Activated T-helper 1 cell treated with anti-CD3 and anti-CD28 coated beads, Interleukin-12 subunit alpha, Interleukin-12 subunit beta, Interleukin-2, Interleukin-4 antibody, amounts not matched to agents 30 ng/mL and 10 ng/mL and 1 ng/mL, durations not matched to agents 14 hours and 24 hours and 36 hours (primary cell): ENCODE measurements at regions of chr1 and their contacts with region 1.

Region 1: DNA sequence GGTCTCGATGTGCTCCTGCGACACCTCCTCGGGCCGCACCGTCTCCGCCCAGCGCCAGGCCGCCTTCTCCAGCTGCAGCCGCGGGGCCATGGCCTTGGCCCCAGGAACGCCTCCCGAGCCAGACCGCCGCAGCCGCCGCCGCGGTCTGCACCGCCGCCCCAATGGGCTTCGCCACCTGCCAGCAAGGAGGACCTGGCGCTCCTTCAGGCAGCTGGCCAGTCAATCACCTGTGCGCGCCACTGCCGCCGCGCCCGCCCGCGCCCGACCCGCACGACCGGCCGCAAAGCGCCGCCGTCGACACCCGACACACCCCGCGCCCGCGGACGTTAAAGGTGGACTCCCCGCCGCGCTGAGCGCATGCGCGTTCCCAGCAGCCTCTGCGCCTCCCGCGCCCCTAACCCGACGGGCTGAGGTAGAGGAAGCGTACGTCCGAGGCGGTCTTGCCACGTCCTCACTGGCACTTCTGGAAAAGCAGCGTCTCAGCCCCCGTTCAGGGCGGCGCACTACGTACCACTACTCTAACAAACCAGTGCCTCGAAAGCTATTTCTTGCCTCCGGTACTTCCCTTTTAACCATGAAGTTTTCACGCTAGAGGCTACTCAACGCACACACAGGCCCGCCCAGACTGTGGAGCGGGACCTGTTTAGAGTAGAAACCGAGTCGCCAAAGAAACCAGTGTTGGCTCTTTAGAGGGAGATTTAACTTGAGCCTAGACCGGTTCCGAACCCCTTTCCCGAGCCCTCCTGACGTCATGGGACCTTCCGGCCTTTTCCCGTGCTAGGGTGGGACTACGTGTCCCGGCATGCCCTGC is at the start of gene USP48:
- DNase-seq: peak; percentile 98
- H3K4me3 Mint-ChIP-seq: peak within 1 kb of the TSS; percentile 91
- H3K27ac Mint-ChIP-seq: peak within 1 kb of the TSS; percentile 100
- H3K4me1 Mint-ChIP-seq: peaks cover 26% of the 10 kb centered on the region
- H3K27me3 Mint-ChIP-seq: peaks cover 3% of the 10 kb centered on the region
- total RNA-seq, gene USP48: 88.7 and 97.1 TPM in 2 replicates

Region 2: GRCh38 chr1:21294266-21294989 is 488.6 kb before region 1 on chr1:
- intact Hi-C with region 1: loop called (anchors 1 kb)
- DNase-seq: peak; percentile 79
- H3K4me3 Mint-ChIP-seq: peak overlapping the region; percentile 76
- H3K27ac Mint-ChIP-seq: peak overlapping the region; percentile 95
- H3K4me1 Mint-ChIP-seq: peaks cover 80% of the 10 kb centered on the region
- H3K27me3 Mint-ChIP-seq: no peaks in the 10 kb centered on the region

Region 3: DNA sequence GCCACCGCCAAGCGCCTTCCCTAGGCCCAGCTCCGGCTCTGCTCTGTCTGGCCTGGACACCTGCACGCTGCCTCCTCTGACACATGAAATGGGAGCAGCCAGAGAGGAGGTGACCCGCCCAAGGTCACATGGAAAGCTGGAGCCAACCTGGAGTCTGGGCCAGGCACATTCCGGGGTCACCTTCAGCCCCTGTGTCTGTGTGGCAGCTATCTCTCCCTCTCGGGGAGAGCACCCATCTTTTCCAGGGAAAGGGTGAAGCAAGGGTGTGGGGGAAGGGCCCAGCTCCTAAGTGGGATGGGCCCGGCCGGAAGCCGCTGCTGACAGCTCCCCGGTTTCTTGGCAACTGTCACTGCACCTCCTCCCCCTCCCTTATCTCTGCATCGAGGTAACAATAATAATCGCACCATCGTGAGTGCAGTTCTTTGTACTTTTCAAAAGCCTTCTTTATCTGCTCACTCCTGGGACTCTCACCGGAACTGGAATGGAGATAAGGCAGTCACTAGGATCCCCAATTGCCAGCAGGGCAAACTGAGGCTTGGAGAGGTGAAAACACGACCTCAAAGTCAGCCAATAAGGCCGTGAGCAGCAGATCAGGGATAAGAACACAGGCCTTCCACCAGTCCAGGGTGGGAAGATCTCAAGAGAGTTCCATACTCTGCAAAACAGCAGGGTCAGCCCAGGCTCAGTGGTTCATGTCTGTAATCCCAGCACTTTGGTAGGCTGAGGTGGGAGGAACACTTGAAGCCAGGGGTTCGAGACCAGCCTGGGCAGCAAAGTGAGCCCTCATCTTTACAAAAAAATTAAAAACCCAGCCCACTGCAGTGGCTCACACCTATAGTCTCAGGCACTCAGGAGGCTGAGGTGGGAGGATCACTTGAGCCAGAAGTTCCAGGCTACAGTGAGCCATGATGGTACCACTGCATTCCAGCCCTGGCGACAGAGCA is 150.9 kb before region 1 on chr1:
- intact Hi-C with region 1: no loop called
- DNase-seq: no peak
- H3K4me3 Mint-ChIP-seq: no peak overlapping the region
- H3K27ac Mint-ChIP-seq: no peak overlapping the region
- H3K4me1 Mint-ChIP-seq: no peaks in the 10 kb centered on the region
- H3K27me3 Mint-ChIP-seq: peaks cover 10% of the 10 kb centered on the region

Region 4: GRCh38 chr1:21703318-21703963 is 79.6 kb before region 1 on chr1:
- intact Hi-C with region 1: loop called (anchors 2 kb)
- DNase-seq: no peak
- H3K4me3 Mint-ChIP-seq: no peak overlapping the region
- H3K27ac Mint-ChIP-seq: no peak overlapping the region
- H3K4me1 Mint-ChIP-seq: peaks cover 17% of the 10 kb centered on the region
- H3K27me3 Mint-ChIP-seq: no peaks in the 10 kb centered on the region

Region 5: DNA sequence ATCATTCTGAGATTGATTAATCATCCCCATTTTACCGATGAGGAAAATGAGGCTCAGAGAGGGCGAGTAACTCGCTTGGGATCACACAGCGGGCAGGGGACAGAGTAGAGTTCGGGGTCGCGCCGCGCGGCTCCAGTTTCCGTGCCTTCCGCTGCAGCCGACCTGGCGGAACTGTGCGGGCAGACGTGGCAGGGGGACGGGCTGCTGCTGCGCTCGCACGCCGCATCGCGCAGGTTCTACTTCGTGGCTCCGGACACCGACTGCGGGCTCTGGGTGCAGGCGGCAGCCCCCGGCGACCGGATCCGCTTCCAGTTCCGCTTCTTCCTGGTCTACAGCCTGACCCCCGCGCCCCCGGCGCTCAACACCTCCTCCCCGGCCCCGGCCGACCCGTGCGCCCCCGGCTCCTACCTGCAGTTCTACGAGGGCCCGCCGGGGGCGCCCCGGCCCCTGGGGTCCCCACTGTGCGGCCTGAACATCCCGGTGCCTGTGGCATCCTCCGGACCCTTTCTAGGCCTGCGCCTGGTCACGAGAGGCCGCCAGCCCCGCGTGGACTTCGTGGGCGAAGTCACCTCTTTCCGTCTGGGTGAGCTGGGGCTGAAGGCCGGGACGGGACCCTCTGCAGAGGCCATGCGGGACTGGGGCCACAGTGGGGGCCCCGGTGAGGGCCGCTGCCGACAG is 31.3 kb after region 1 on chr1:
- intact Hi-C with region 1: loop called (anchors 1 kb)
- DNase-seq: no peak
- H3K4me3 Mint-ChIP-seq: peak overlapping the region; percentile 30
- H3K27ac Mint-ChIP-seq: no peak overlapping the region
- H3K4me1 Mint-ChIP-seq: peaks cover 11% of the 10 kb centered on the region
- H3K27me3 Mint-ChIP-seq: peaks cover 21% of the 10 kb centered on the region

Region 6: GRCh38 chr1:22025368-22026155 is 242.5 kb after region 1 on chr1:
- intact Hi-C with region 1: loop called (anchors 1 kb)
- DNase-seq: peak; percentile 90
- H3K4me3 Mint-ChIP-seq: peak overlapping the region; percentile 99
- H3K27ac Mint-ChIP-seq: peak overlapping the region; percentile 100
- H3K4me1 Mint-ChIP-seq: peaks cover 55% of the 10 kb centered on the region
- H3K27me3 Mint-ChIP-seq: no peaks in the 10 kb centered on the region